ENCODE measurements at regions of chr7 and their contacts with region 1.

Region 1: DNA sequence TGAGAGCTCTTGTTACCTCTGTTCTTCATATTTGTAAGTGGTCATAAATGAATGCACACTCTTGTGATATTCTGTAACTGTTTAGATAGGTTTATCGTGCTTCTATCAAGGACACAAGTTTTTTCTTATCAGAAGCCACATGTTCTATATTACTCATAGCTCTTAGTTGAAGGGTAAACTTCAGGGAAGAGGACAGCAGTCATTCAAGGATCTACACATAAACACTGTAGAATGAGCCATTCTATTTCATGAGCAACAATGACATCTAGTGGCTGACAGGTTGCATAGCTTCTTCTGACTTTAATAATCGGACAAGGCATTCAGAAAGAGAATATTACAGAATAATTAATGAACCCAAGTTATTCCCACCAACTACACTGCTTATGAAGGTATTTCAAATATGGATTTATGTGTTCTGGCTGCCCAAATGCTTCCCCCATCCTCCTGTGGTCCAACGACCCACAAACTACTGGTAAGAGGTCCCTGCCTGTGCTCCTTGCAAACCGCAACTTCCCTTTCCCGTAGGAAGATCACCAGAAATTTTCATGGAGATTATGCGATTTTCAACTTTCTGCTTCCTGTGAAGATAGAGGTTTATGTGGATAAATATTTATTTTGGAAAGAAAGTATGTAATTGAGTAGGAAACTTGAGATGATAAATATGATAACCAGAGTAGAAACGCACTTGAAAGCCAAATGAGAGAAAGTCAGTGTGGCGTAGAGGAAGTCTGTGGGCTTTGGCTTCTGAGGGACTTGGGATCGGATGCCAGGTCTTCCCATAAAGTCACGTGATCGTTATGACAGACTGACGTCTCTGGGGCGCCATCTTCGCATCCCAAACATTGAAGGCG is 16.8 kb upstream of the ABCB5 start:
- DNase-seq: no peak
- H3K4me3 ChIP-seq: no peak overlapping the region
- H3K27me3 ChIP-seq: no peaks in the 10 kb centered on the region
- CTCF ChIP-seq: peak; percentile 71

Region 2: GRCh38 chr7:19713676-19714075 is 885.0 kb before region 1 on chr7:
- CTCF ChIA-PET with region 1: interaction called, 121 read pairs
- POLR2A ChIA-PET with region 1: no interaction called
- DNase-seq: no peak
- H3K4me3 ChIP-seq: no peak overlapping the region
- H3K27me3 ChIP-seq: no peaks in the 10 kb centered on the region; the same call in 1 of the 2 replicates
- CTCF ChIP-seq: peak; percentile 61

Region 3: GRCh38 chr7:19754521-19755116 is 844.1 kb before region 1 on chr7:
- CTCF ChIA-PET with region 1: interaction called, 30 read pairs
- POLR2A ChIA-PET with region 1: no interaction called
- DNase-seq: peak; percentile 5
- H3K4me3 ChIP-seq: no peak overlapping the region
- H3K27me3 ChIP-seq: no peaks in the 10 kb centered on the region
- CTCF ChIP-seq: peak; percentile 70

Region 4: DNA sequence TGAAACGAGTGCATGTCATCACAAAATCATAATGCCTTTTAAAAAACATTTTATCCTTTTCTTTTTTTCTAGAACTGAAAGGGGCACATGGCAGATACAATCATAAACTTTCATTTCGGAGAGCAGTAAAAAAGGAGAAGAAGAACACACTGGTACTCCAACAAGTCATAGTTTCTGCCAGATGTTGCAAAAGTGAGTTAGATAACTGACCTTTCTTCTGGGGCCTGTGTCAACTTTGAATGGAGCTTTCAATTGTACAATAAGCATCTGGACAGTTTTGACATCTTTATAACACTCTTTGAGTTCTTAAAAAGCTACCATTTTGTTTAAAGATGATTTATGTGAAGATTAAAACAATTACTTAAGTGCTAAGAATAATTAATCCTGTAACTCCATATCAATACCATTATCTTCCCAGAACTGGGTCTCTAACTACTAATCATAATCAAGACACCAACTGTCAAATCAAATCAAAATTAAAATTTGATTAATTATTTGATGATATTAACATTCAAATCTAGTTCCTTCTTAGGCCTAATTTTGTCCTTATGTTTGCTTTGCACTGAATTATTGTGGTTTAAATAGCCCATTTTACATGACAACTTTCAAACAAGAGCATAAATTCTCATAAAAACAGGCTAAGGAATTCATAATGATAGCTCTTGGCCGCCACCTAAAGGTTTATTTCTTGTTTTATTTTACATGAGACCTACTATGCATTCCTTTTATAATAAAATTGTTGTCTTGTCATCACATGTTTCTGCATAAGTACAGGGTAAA is 287.5 kb before region 1 on chr7:
- CTCF ChIA-PET with region 1: interaction called, 13 read pairs
- POLR2A ChIA-PET with region 1: no interaction called
- DNase-seq: peak; percentile 22
- H3K4me3 ChIP-seq: no peak overlapping the region
- H3K27me3 ChIP-seq: no peaks in the 10 kb centered on the region
- CTCF ChIP-seq: peak; percentile 40

Region 5: DNA sequence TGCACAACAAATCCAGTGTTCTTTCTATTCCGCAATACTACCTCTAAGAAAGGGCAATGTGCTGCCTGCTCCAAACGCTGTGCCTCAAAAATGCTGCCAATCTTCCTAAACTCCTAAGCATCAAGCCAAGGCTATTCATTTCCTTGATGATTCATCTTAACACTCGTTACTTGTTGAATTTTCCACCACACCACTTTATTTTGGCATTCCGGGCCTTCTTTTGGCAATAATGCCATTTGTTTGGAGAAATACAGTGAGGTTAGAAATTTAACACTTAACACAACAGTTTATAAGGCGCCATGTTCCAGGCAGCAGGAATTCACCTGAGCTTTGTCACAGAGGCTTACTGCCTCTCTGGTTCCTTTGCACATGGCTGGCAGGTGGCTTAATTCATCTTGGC is 65.8 kb before region 1 on chr7:
- CTCF ChIA-PET with region 1: no interaction called
- POLR2A ChIA-PET with region 1: no interaction called
- DNase-seq: no peak
- H3K4me3 ChIP-seq: no peak overlapping the region
- H3K27me3 ChIP-seq: no peaks in the 10 kb centered on the region
- CTCF ChIP-seq: no peak